ENCODE measurements at regions of chr7 and their contacts with region 1.

Region 1: DNA sequence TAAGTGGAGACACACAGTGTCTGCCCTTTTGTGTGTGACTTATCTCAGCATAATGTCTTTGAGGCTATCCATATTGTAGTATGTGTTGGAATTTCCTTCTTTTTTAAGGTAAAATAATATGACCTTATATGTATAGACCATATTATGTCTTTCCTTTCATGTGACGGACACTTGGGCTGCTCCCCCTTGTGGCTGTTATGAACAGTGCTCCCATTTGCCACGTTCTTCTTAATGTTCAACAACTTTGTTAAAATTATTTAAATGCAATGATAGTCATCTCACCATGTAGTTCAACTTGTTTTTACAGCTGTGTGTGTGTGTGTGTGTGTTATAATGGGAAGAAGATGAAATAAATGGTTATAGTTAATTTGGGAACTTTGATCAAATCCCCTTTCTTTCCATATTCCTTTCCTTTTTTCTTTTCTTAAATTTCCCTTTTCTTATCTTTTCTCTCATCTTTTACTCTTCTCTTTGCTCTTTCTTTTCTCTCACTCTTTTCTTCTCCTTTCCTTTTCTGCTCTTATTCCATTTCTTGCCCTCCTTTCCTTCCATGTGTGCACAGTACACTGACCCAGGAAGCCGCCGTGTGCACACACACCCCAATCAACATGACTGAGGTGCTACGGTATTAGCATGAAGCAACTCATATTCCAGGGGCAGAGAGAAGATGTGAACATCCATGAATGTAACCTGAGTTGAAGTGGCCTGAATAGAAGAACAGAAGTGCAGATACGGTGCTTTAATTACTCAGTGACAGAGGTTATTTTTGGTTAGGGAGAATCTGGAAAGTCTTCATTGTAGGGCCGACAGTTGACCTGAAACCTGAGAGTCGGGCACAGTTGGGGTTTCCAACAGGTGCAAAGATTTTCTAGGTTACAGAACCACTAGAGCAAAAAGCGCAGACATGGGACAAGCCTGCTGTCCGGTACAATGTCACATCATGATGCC is 596.7 kb downstream of the SDK1 start:
- DNase-seq: peak; percentile 58
- H3K4me3 ChIP-seq: no peak overlapping the region
- H3K27ac ChIP-seq: no peak overlapping the region
- H3K4me1 ChIP-seq: no peaks in the 10 kb centered on the region
- H3K27me3 ChIP-seq: no peaks in the 10 kb centered on the region
- CTCF ChIP-seq: peak; percentile 93

Region 2: GRCh38 chr7:2863461-2864066 is 1034.1 kb before region 1 on chr7:
- CTCF ChIA-PET with region 1: no interaction called
- POLR2A ChIA-PET with region 1: no interaction called
- intact Hi-C with region 1: loop called (anchors 5 kb)
- DNase-seq: peak; percentile 77
- H3K4me3 ChIP-seq: no peak overlapping the region
- H3K27ac ChIP-seq: peak overlapping the region; percentile 54
- H3K4me1 ChIP-seq: peaks cover 9% of the 10 kb centered on the region
- H3K27me3 ChIP-seq: no peaks in the 10 kb centered on the region
- CTCF ChIP-seq: no peak

Region 3: GRCh38 chr7:3300651-3301378 is 596.9 kb before region 1 on chr7 and contains the start of gene SDK1:
- CTCF ChIA-PET with region 1: no interaction called
- POLR2A ChIA-PET with region 1: no interaction called
- intact Hi-C with region 1: loop called (anchors 2 kb)
- DNase-seq: peak; percentile 93
- H3K4me3 ChIP-seq: peak within 1 kb of the TSS; percentile 63
- H3K27ac ChIP-seq: peak within 1 kb of the TSS; percentile 24
- H3K4me1 ChIP-seq: peaks cover 15% of the 10 kb centered on the region
- H3K27me3 ChIP-seq: peaks cover 30% of the 10 kb centered on the region
- CTCF ChIP-seq: peak; percentile 62
- total RNA-seq, gene SDK1: 14.7 and 17.0 TPM in 2 replicates

Region 4: GRCh38 chr7:3307435-3307834 is 590.3 kb before region 1 on chr7:
- CTCF ChIA-PET with region 1: no interaction called
- POLR2A ChIA-PET with region 1: no interaction called
- intact Hi-C with region 1: loop called (anchors 2 kb)
- DNase-seq: no peak
- H3K4me3 ChIP-seq: no peak overlapping the region
- H3K27ac ChIP-seq: no peak overlapping the region
- H3K4me1 ChIP-seq: peaks cover 20% of the 10 kb centered on the region
- H3K27me3 ChIP-seq: peaks cover 19% of the 10 kb centered on the region
- CTCF ChIP-seq: no peak

Region 5: DNA sequence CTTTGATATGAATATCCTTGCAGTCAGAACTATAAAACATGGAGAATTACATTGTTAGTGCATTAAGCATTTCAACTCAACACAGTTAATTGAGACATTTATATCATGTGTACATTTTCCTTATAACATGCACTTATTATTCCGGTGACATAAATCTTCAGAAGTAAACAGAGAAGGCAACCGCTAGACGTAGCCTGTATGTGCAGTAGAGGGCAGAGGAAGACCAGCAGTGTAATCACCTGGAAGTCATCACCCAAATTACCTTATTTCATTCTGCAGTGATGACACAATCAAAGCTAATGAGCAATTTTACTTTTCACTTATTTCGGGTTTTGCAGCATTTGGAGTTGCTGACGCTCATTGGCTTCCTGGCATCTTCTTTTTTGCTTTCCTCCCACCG is 202.1 kb before region 1 on chr7:
- CTCF ChIA-PET with region 1: no interaction called
- POLR2A ChIA-PET with region 1: no interaction called
- intact Hi-C with region 1: loop called (anchors 5 kb)
- DNase-seq: no peak
- H3K4me3 ChIP-seq: no peak overlapping the region
- H3K27ac ChIP-seq: no peak overlapping the region
- H3K4me1 ChIP-seq: peaks cover 4% of the 10 kb centered on the region
- H3K27me3 ChIP-seq: no peaks in the 10 kb centered on the region
- CTCF ChIP-seq: peak; percentile 33; the same call in 1 of the 2 replicates

Region 6: GRCh38 chr7:3805151-3805550 is 92.6 kb before region 1 on chr7:
- CTCF ChIA-PET with region 1: no interaction called
- POLR2A ChIA-PET with region 1: no interaction called
- intact Hi-C with region 1: no loop called
- DNase-seq: peak; percentile 2
- H3K4me3 ChIP-seq: no peak overlapping the region
- H3K27ac ChIP-seq: no peak overlapping the region
- H3K4me1 ChIP-seq: no peaks in the 10 kb centered on the region
- H3K27me3 ChIP-seq: no peaks in the 10 kb centered on the region
- CTCF ChIP-seq: no peak